CD4-positive, alpha-beta memory T cell (primary cell): ENCODE measurements at regions of chr2 and their contacts with region 1.

Region 1: DNA sequence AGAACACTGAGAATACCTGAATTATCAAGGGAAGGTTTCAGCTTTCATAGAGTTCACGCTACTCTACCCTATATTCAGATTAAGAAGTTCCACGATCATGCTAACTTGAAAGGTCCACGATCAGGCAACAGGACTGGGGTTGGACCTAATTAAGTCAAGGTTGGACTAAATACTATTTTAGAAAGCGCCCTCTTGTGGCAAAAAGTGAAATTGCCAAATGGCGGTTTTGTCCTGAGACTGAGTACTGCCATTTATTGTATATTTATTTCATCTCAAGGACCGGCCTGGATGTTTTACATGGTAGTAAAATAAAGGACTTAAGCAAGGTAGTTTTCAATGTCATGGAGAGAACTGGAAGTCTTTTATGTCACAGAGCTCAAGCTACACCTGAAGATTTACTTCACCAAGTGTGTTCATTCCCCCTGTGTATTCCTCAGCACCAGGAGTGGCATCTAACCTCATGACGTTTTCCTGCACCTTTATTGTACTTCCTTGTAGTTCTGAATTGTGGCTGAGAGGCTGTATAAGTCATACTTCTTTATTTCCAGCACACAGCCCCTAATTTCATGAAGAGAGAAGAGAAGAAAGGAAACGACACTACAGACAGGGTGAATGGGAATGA is 56.8 kb downstream of the SRD5A2 start:
- DNase-seq: peak in 4 of 5 donors; percentile 26 to 46 (median 42)
- H3K4me3 ChIP-seq: no peak overlapping the region
- H3K4me3 Mint-ChIP-seq: no peak overlapping the region
- H3K27ac ChIP-seq: no peak overlapping the region
- H3K27ac Mint-ChIP-seq: no peak overlapping the region
- H3K4me1 ChIP-seq: no peaks in the 10 kb centered on the region
- H3K4me1 Mint-ChIP-seq: no peaks in the 10 kb centered on the region
- H3K27me3 ChIP-seq: no peaks in the 10 kb centered on the region
- H3K27me3 Mint-ChIP-seq: peaks cover 7 to 18% of the 10 kb centered on the region in 2 donors

Region 2: GRCh38 chr2:31534636-31535035 is 10.7 kb after region 1 on chr2:
- CTCF ChIA-PET with region 1: interaction called, 10 read pairs
- POLR2A ChIA-PET with region 1: no interaction called
- intact Hi-C with region 1: no loop called
- DNase-seq: no peak
- H3K4me3 ChIP-seq: no peak overlapping the region
- H3K4me3 Mint-ChIP-seq: no peak overlapping the region
- H3K27ac ChIP-seq: no peak overlapping the region
- H3K27ac Mint-ChIP-seq: peak overlapping the region in 1 of 7 donors; percentile 14
- H3K4me1 ChIP-seq: no peaks in the 10 kb centered on the region
- H3K4me1 Mint-ChIP-seq: peaks cover 0 to 1% (median 0%) of the 10 kb centered on the region in 4 donors
- H3K27me3 ChIP-seq: peaks cover 3% of the 10 kb centered on the region
- H3K27me3 Mint-ChIP-seq: peaks cover 11 to 15% of the 10 kb centered on the region in 2 donors

Region 3: DNA sequence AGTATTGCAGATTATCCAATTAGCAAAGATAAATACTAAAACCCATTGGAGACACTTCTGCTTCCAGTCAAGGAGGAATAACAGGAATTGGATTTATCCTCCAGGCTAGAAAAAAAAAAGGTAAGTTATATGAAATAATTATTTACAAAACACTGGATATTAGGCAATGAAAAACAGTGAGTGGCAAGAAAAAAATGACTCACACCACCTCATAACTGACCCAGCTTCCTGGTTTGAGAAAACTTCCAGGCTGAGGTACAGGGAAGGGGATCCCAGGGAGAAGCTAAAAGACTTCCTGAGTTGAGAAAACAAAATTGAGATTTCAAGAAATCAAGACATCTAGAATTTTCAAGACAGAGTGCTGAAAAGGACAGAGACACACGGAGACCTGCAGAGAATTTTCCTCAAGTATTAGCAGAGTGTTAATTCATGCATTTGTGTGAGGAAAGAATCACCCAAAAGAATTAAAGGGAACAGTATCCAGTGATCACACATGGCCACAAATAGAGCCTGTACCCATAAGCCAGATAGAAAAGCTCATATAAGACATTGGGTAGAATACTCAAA is 39.4 kb after region 1 on chr2:
- CTCF ChIA-PET with region 1: no interaction called
- POLR2A ChIA-PET with region 1: no interaction called
- intact Hi-C with region 1: no loop called
- DNase-seq: no peak
- H3K4me3 ChIP-seq: no peak overlapping the region
- H3K4me3 Mint-ChIP-seq: no peak overlapping the region
- H3K27ac ChIP-seq: no peak overlapping the region
- H3K27ac Mint-ChIP-seq: no peak overlapping the region
- H3K4me1 ChIP-seq: no peaks in the 10 kb centered on the region
- H3K4me1 Mint-ChIP-seq: no peaks in the 10 kb centered on the region
- H3K27me3 ChIP-seq: no peaks in the 10 kb centered on the region
- H3K27me3 Mint-ChIP-seq: peaks cover 4 to 11% of the 10 kb centered on the region in 2 donors

Region 4: DNA sequence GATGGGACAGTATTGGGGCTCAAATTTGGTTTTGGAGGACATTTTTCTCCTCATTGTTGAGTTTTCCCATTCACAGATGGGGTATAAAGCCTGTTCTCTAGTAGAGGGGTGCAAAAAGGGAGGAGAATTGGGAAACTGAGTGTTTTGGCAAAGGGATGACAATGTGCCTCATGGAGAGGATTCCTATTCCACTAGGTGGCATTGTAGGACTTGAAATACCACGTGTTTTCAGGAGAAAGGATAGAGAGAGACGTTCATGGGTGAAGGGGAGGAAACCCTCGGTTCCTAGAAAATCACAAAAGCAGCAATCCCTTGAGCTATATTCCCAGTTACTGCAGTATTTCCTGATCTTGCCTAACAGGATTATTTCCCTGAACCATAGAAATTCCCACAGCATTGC is 170.5 kb after region 1 on chr2:
- CTCF ChIA-PET with region 1: no interaction called
- POLR2A ChIA-PET with region 1: no interaction called
- intact Hi-C with region 1: no loop called
- DNase-seq: no peak
- H3K4me3 ChIP-seq: no peak overlapping the region
- H3K4me3 Mint-ChIP-seq: no peak overlapping the region
- H3K27ac ChIP-seq: no peak overlapping the region
- H3K27ac Mint-ChIP-seq: no peak overlapping the region
- H3K4me1 ChIP-seq: no peaks in the 10 kb centered on the region
- H3K4me1 Mint-ChIP-seq: no peaks in the 10 kb centered on the region
- H3K27me3 ChIP-seq: no peaks in the 10 kb centered on the region
- H3K27me3 Mint-ChIP-seq: peaks cover 0 to 3% of the 10 kb centered on the region in 2 donors

Region 5: DNA sequence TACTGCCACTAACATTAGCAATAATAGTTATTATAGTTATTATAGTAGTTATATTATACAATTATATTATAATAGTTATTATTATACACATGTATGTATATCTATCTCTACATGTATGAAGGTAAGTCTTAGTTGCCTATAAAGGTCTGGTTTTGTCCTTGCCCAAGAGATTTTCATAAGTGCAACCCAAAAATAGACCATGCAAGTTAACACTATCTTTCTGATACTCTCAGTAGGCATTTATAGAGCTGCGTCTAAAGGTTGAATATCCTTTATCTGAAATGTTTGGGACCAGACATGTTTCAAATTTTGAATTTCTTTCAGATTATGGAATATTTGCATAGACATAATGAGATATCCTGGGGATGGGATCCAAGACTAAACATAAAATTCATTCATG is 311.5 kb after region 1 on chr2:
- CTCF ChIA-PET with region 1: no interaction called
- POLR2A ChIA-PET with region 1: no interaction called
- intact Hi-C with region 1: loop called (anchors 5 kb)
- DNase-seq: no peak
- H3K4me3 ChIP-seq: no peak overlapping the region
- H3K4me3 Mint-ChIP-seq: no peak overlapping the region
- H3K27ac ChIP-seq: no peak overlapping the region
- H3K27ac Mint-ChIP-seq: no peak overlapping the region
- H3K4me1 ChIP-seq: no peaks in the 10 kb centered on the region
- H3K4me1 Mint-ChIP-seq: peaks cover 0 to 5% (median under 1%) of the 10 kb centered on the region in 4 donors
- H3K27me3 ChIP-seq: no peaks in the 10 kb centered on the region
- H3K27me3 Mint-ChIP-seq: no peaks in the 10 kb centered on the region